Naive thymus-derived CD4-positive, alpha-beta T cell (primary cell): ENCODE measurements at regions of chr6 and their contacts with region 1.

Region 1: DNA sequence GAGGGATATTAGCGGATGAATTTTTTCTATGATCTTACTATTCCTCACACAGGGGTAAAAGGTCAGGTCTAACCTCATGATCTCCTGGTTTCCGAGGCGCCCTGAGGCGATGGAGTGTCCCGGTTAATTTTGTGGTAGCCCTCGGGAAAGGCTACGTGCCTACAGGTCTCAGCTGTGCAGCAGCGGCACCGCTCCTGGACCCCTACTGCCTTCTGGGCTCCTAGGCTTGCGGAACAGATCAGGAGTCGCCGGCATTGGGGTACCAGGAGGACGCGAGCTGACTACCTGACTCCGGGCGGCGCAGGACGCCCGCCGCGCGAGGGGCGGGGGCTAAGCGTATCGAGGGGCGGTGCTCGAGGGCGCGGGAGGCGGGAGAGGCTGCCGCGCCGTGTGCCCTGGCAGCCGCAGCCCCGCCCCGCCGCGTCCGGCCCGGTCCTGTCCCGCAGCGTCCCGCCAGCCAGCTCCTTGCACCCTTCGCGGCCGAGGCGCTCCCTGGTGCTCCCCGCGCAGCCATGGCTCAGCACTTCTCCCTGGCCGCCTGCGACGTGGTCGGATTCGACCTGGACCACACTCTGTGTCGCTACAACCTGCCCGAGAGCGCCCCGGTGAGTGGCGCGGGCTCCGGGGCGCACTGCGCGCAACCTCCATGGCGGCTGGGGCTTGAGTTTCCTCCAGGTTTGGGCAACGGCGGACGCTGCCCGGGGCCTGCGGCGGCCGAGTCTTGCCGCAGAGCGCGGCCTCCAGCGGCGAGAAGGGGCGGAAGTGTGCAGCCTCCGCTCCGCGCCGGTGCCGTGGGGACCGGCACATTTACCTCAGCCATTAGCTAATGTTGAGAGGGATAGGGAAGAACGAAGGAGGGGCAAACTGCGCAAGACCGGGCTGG is at the start of gene NT5DC1:
- DNase-seq: peak; percentile 76 to 90 (median 82)
- ATAC-seq: peak; percentile 94
- H3K4me3 ChIP-seq: peak within 1 kb of the TSS; percentile 77
- H3K4me3 Mint-ChIP-seq: peak within 1 kb of the TSS; percentile 89 to 99 (median 96)
- H3K27ac ChIP-seq: peak within 1 kb of the TSS; percentile 79
- H3K27ac Mint-ChIP-seq: peak within 1 kb of the TSS; percentile 85 to 96 (median 92)
- H3K4me1 ChIP-seq: peaks cover 25 to 32% of the 10 kb centered on the region in 2 donors
- H3K4me1 Mint-ChIP-seq: peaks cover 32 to 64% (median 57%) of the 10 kb centered on the region in 7 donors
- H3K27me3 ChIP-seq: no peaks in the 10 kb centered on the region
- H3K27me3 Mint-ChIP-seq: no peaks in the 10 kb centered on the region
- total RNA-seq, gene NT5DC1: 30.5 to 52.6 (median 39.7) TPM

Region 2: GRCh38 chr6:116010790-116011401 is 89.8 kb before region 1 on chr6:
- CTCF ChIA-PET with region 1: interaction called, 18 read pairs
- POLR2A ChIA-PET with region 1: no interaction called
- intact Hi-C with region 1: loop called (anchors 1 kb)
- DNase-seq: peak in 7 of 9 donors; percentile 17 to 32 (median 27)
- ATAC-seq: no peak
- H3K4me3 ChIP-seq: no peak overlapping the region
- H3K4me3 Mint-ChIP-seq: no peak overlapping the region
- H3K27ac ChIP-seq: no peak overlapping the region
- H3K27ac Mint-ChIP-seq: no peak overlapping the region
- H3K4me1 ChIP-seq: no peaks in the 10 kb centered on the region
- H3K4me1 Mint-ChIP-seq: no peaks in the 10 kb centered on the region
- H3K27me3 ChIP-seq: no peaks in the 10 kb centered on the region
- H3K27me3 Mint-ChIP-seq: peaks cover 4 to 20% (median 9%) of the 10 kb centered on the region in 5 donors

Region 3: DNA sequence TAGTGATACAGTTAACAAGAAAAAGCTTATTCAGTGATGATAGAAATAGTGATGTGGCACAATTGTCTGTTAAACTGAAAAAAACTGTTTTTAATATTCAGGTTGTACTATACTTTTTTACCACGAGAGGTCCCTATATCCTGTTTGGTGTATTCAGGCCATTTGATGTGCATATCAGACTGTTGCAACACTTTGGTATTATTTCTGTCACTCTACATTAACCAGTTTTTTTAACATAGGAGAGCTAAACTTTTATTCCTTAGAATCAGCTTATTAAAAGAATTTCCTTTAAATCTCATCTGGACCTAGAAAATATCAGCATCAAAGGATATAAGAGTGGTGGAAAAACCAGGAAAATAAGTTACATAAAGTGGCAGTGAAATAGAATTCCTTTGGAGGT is 116.4 kb after region 1 on chr6:
- CTCF ChIA-PET with region 1: interaction called, 3 read pairs
- POLR2A ChIA-PET with region 1: no interaction called
- intact Hi-C with region 1: loop called in 1 of 2 experiments (anchors 5 kb)
- DNase-seq: peak in 6 of 9 donors; percentile 10 to 55 (median 44)
- ATAC-seq: peak; percentile 86
- H3K4me3 ChIP-seq: no peak overlapping the region
- H3K4me3 Mint-ChIP-seq: no peak overlapping the region
- H3K27ac ChIP-seq: no peak overlapping the region
- H3K27ac Mint-ChIP-seq: peak overlapping the region in 5 of 9 donors; percentile 7 to 76 (median 44)
- H3K4me1 ChIP-seq: no peaks in the 10 kb centered on the region
- H3K4me1 Mint-ChIP-seq: peaks cover 0 to 12% (median 6%) of the 10 kb centered on the region in 7 donors
- H3K27me3 ChIP-seq: no peaks in the 10 kb centered on the region
- H3K27me3 Mint-ChIP-seq: no peaks in the 10 kb centered on the region

Region 4: DNA sequence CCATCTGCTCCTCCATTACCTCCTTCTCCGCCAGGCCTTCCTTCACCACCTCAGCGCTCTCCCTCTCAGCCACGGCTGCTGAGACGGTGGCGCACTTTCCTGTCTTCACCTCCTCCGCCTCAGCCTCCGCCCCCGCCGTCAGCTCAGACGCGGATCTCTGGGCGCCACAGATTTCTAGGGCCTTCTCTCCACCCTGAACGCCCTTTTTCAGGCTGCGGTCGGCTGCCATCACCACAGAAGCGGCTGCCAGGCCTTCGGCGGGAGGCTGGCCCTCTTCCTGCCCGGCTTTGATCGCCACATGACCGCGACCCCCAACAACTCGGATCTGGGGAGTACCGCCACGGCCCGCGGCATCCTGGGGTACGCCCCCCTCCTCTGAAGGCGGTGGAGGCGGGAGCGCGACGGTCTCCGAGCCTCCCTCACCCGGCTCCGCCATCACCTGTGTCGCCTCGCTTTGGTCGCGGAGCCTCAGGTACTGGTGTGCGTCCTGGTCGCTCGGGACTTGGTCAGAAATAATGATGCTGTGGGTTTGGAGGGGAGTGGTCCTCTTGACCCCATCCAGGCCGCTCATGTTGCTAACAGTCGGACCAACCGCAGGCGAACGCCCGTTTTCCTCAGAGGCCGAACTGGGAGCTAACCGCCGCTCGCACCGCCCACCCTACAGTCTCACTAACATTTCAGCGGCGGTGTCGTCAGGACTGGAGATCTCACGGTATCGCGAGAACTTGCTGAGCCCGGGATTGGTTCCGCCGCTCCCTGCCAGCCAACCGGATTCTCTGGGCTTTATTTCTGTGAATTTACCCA is 178.8 kb after region 1 on chr6 and contains the start of gene TSPYL1:
- CTCF ChIA-PET with region 1: no interaction called
- POLR2A ChIA-PET with region 1: interaction called, 20 read pairs
- intact Hi-C with region 1: loop called (anchors 1 to 2 kb)
- DNase-seq: peak; percentile 85 to 98 (median 96)
- ATAC-seq: peak; percentile 92
- H3K4me3 ChIP-seq: peak within 1 kb of the TSS; percentile 86
- H3K4me3 Mint-ChIP-seq: peak within 1 kb of the TSS; percentile 96 to 100 (median 98)
- H3K27ac ChIP-seq: peak within 1 kb of the TSS; percentile 99
- H3K27ac Mint-ChIP-seq: peak within 1 kb of the TSS; percentile 98 to 100 (median 100)
- H3K4me1 ChIP-seq: peaks cover 39 to 43% of the 10 kb centered on the region in 2 donors
- H3K4me1 Mint-ChIP-seq: peaks cover 37 to 73% (median 54%) of the 10 kb centered on the region in 7 donors
- H3K27me3 ChIP-seq: no peaks in the 10 kb centered on the region
- H3K27me3 Mint-ChIP-seq: peaks cover 0 to 6% (median 0%) of the 10 kb centered on the region in 5 donors
- total RNA-seq, gene TSPYL1: 42.8 to 226 (median 104) TPM

Region 5: GRCh38 chr6:116570856-116571682 is 470.4 kb after region 1 on chr6 and contains the start of gene RWDD1:
- CTCF ChIA-PET with region 1: no interaction called
- POLR2A ChIA-PET with region 1: interaction called, 13 read pairs
- intact Hi-C with region 1: loop called (anchors 1 kb)
- DNase-seq: peak; percentile 91 to 99 (median 98)
- ATAC-seq: peak; percentile 98
- H3K4me3 ChIP-seq: peak within 1 kb of the TSS; percentile 86
- H3K4me3 Mint-ChIP-seq: peak within 1 kb of the TSS; percentile 94 to 99 (median 98)
- H3K27ac ChIP-seq: peak within 1 kb of the TSS; percentile 95
- H3K27ac Mint-ChIP-seq: peak within 1 kb of the TSS; percentile 96 to 100 (median 99)
- H3K4me1 ChIP-seq: peaks cover 16 to 21% of the 10 kb centered on the region in 2 donors
- H3K4me1 Mint-ChIP-seq: peaks cover 33 to 62% (median 55%) of the 10 kb centered on the region in 7 donors
- H3K27me3 ChIP-seq: no peaks in the 10 kb centered on the region
- H3K27me3 Mint-ChIP-seq: peaks cover 0 to 11% (median 0%) of the 10 kb centered on the region in 5 donors
- total RNA-seq, gene RWDD1: 33.2 to 39.9 (median 36.7) TPM

Region 6: GRCh38 chr6:116680975-116681808 is 580.5 kb after region 1 on chr6 and contains the start of gene KPNA5:
- CTCF ChIA-PET with region 1: no interaction called
- POLR2A ChIA-PET with region 1: interaction called, 3 read pairs
- intact Hi-C with region 1: loop called (anchors 1 to 2 kb)
- DNase-seq: peak; percentile 82 to 91 (median 89)
- ATAC-seq: peak; percentile 97
- H3K4me3 ChIP-seq: peak within 1 kb of the TSS; percentile 88
- H3K4me3 Mint-ChIP-seq: peak within 1 kb of the TSS; percentile 94 to 99 (median 98)
- H3K27ac ChIP-seq: peak within 1 kb of the TSS; percentile 85
- H3K27ac Mint-ChIP-seq: peak within 1 kb of the TSS; percentile 96 to 99 (median 97)
- H3K4me1 ChIP-seq: peaks cover 0 to 13% of the 10 kb centered on the region in 2 donors
- H3K4me1 Mint-ChIP-seq: peaks cover 19 to 71% (median 46%) of the 10 kb centered on the region in 7 donors
- H3K27me3 ChIP-seq: no peaks in the 10 kb centered on the region
- H3K27me3 Mint-ChIP-seq: no peaks in the 10 kb centered on the region
- total RNA-seq, gene KPNA5: 11.0 to 78.2 (median 53.2) TPM